Activated T-helper 2 cell treated with anti-CD3 and anti-CD28 coated beads, Interferon-gamma antibody, Interleukin-2, Interleukin-4, amounts not matched to agents 10 μg/mL and 5 μg/mL and 100 μg/mL, durations not matched to agents 14 hours and 24 hours and 36 hours (primary cell): ENCODE measurements at regions of chr13 and their contacts with region 1.

Region 1: GRCh38 chr13:31909864-31910551 is 121.6 kb upstream of the FRY start:
- DNase-seq: peak; percentile 38
- H3K4me3 Mint-ChIP-seq: no peak overlapping the region
- H3K27ac Mint-ChIP-seq: no peak overlapping the region
- H3K4me1 Mint-ChIP-seq: peaks cover 22% of the 10 kb centered on the region
- H3K27me3 Mint-ChIP-seq: peaks cover 23% of the 10 kb centered on the region

Region 2: DNA sequence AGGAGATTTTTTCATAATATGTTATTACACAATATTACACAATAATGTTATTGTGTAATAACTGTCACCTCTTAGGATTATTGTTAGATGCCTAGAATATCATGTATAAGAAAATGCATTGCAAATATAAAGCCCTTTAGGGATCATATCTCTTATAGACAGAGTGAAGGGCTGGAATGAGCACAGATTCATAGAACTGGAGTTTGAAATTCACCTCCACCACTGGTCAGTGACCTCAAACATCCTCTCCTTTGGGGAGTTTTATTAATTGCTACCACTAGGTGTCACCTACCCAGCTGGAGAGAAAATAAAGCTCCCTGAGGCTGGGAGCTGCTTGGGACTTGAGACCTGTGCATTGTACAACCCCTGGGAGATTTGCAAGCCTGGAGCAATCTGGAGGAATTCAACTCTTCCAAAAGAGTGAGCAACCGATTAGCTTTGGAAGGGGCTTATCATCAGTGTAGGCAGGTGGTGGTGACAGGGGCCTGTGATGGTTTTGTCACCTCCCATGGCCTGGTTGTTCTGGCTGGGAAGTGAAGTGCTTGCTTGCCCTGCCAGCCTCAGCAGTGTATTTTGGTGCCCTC is 91.3 kb after region 1 on chr13:
- intact Hi-C with region 1: loop called (anchors 1 kb)
- DNase-seq: no peak
- H3K4me3 Mint-ChIP-seq: no peak overlapping the region
- H3K27ac Mint-ChIP-seq: no peak overlapping the region
- H3K4me1 Mint-ChIP-seq: no peaks in the 10 kb centered on the region
- H3K27me3 Mint-ChIP-seq: peaks cover 4% of the 10 kb centered on the region

Region 3: GRCh38 chr13:32117701-32118100 is 207.7 kb after region 1 on chr13:
- intact Hi-C with region 1: loop called (anchors 10 kb)
- DNase-seq: no peak
- H3K4me3 Mint-ChIP-seq: no peak overlapping the region
- H3K27ac Mint-ChIP-seq: no peak overlapping the region
- H3K4me1 Mint-ChIP-seq: peaks cover 40% of the 10 kb centered on the region
- H3K27me3 Mint-ChIP-seq: no peaks in the 10 kb centered on the region

Region 4: GRCh38 chr13:32310134-32310706 is 400.2 kb after region 1 on chr13:
- intact Hi-C with region 1: loop called (anchors 1 kb)
- DNase-seq: no peak
- H3K4me3 Mint-ChIP-seq: no peak overlapping the region
- H3K27ac Mint-ChIP-seq: no peak overlapping the region
- H3K4me1 Mint-ChIP-seq: peaks cover 30% of the 10 kb centered on the region
- H3K27me3 Mint-ChIP-seq: peaks cover 6% of the 10 kb centered on the region

Region 5: GRCh38 chr13:32427852-32428580 is 518.0 kb after region 1 on chr13 and contains the start of gene N4BP2L1:
- intact Hi-C with region 1: loop called (anchors 10 kb)
- DNase-seq: peak; percentile 76
- H3K4me3 Mint-ChIP-seq: peak within 1 kb of the TSS; percentile 98
- H3K27ac Mint-ChIP-seq: peak within 1 kb of the TSS; percentile 100
- H3K4me1 Mint-ChIP-seq: peaks cover 39% of the 10 kb centered on the region
- H3K27me3 Mint-ChIP-seq: no peaks in the 10 kb centered on the region
- total RNA-seq, gene N4BP2L1: 26.1 and 28.6 TPM in 2 replicates